Mammary epithelial cell (primary cell): ENCODE measurements at regions of chr2 and their contacts with region 1.

Region 1: DNA sequence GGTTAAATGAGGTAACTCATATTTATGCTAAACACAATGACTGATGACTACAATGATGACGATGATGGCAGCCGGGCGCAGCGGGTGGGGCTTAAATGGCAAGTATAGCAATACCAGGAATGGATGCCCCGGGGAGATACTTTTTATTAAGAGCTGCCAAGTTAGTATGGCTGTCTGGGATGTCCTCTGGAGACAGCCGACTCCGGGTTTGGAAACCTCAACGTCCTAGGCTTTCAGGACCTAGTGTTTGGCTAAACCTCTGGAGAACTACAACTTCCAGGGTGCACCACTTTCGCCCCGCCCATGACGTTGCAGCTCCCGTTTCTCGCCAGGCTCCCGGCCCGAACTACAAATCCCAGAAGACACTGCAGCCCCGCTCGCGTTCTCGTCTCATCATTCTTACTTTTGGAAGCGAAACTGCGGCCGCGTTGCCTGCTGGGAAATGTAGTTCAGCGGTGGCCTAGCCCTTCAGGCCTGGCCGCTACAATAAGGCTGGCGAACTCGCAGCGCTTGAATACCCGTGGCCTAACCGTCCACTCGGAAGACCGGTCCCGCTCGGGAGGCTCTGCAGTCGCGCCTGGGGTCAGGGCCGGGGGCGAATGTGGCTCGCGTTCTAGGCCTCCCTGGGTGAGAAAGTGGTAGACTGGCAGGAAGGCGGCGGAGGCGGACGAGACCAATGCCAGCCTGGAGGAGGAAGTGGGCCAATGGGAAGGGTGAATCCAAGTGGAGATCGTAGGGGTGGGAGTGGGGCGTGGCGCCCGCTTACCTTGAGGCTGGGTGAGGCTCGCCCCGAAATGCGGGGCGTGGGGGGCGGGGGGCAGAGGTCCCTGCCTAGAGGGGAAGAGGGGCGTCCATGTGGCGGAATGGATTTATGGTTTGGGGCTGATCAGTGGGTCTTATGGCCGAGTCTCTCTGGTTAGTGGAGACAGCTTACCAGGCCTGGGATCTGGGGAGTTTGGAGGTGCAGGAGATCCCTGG is at the start of gene SMARCAL1:
- DNase-seq: peak; percentile 95
- H3K4me3 ChIP-seq: peak within 1 kb of the TSS; percentile 81 to 94 (median 89)
- H3K27ac ChIP-seq: peak within 1 kb of the TSS; percentile 85
- H3K4me1 ChIP-seq: peaks cover 8% of the 10 kb centered on the region
- H3K27me3 ChIP-seq: no peaks in the 10 kb centered on the region
- CTCF ChIP-seq: no peak
- total RNA-seq, gene SMARCAL1: 12.8 to 25.8 TPM

Region 2: GRCh38 chr2:216195565-216196029 is 216.7 kb before region 1 on chr2:
- CTCF ChIA-PET with region 1: no interaction called
- dilution Hi-C with region 1: no loop called
- in situ Hi-C with region 1: loop called in 1 of 2 experiments (anchors 25 kb)
- intact Hi-C with region 1: no loop called
- DNase-seq: peak; percentile 92
- H3K4me3 ChIP-seq: no peak overlapping the region
- H3K27ac ChIP-seq: peak overlapping the region; percentile 56
- H3K4me1 ChIP-seq: peaks cover 13% of the 10 kb centered on the region
- H3K27me3 ChIP-seq: no peaks in the 10 kb centered on the region
- CTCF ChIP-seq: no peak

Region 3: DNA sequence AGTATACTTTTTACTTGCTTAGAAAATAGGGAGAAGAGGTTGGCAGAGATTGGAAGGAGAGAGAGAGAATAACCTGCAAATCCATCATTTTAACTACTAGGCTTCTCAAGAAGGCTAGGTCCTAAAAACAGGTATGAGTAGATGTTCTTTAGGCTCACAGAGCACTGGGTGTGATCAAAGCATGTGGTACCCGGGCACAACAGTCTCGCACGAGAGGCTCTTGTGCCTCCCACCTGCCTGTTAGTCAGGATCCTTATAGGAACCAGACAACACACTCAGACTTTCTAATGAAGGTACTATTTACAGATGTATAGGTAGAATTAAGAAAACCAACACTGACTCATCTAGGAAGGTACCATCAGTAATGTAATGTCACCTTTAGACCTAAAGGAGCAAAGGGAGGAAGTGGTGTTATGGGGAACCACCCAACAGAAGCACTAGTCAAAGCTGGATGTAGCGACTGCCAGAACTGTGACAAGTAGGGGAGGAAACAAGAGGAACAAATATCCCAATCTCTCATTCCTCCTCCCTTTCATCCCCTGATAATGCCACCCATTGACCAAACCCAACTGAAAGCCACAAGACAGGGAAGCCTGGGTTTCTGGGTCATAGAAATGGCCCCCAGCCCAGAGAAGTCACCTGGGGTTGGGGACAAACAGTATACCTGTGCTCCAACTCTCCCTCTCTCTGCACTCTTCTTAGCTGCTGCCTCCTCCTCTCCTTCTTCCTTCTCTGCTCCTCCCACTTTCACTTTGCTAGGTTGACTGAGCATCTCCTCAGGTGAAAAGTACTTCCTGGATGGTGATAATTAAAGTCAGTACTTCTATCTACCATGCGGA is 24.0 kb before region 1 on chr2:
- CTCF ChIA-PET with region 1: no interaction called
- dilution Hi-C with region 1: no loop called
- in situ Hi-C with region 1: no loop called
- intact Hi-C with region 1: no loop called
- DNase-seq: no peak
- H3K4me3 ChIP-seq: no peak overlapping the region
- H3K27ac ChIP-seq: no peak overlapping the region
- H3K4me1 ChIP-seq: no peaks in the 10 kb centered on the region
- H3K27me3 ChIP-seq: peaks cover 1% of the 10 kb centered on the region
- CTCF ChIP-seq: no peak

Region 4: GRCh38 chr2:216498418-216499413 is 86.4 kb after region 1 on chr2 and contains the start of gene RPL37A:
- CTCF ChIA-PET with region 1: no interaction called
- dilution Hi-C with region 1: no loop called
- in situ Hi-C with region 1: no loop called
- intact Hi-C with region 1: loop called (anchors 1 kb)
- DNase-seq: peak; percentile 93
- H3K4me3 ChIP-seq: peak within 1 kb of the TSS; percentile 73 to 98 (median 96)
- H3K27ac ChIP-seq: peak within 1 kb of the TSS; percentile 95
- H3K4me1 ChIP-seq: peaks cover 34% of the 10 kb centered on the region
- H3K27me3 ChIP-seq: no peaks in the 10 kb centered on the region
- CTCF ChIP-seq: no peak
- total RNA-seq, gene RPL37A: 855 to 2,728 TPM